ENCODE measurements at regions of chr2 and their contacts with region 1.

Region 1: GRCh38 chr2:174023591-174024523 is 58.7 kb upstream of the SP3 start:
- DNase-seq: peak; percentile 61
- H3K4me3 Mint-ChIP-seq: no peak overlapping the region
- H3K27ac Mint-ChIP-seq: peak overlapping the region; percentile 19
- H3K4me1 Mint-ChIP-seq: peaks cover 8% of the 10 kb centered on the region
- H3K27me3 Mint-ChIP-seq: no peaks in the 10 kb centered on the region

Region 2: DNA sequence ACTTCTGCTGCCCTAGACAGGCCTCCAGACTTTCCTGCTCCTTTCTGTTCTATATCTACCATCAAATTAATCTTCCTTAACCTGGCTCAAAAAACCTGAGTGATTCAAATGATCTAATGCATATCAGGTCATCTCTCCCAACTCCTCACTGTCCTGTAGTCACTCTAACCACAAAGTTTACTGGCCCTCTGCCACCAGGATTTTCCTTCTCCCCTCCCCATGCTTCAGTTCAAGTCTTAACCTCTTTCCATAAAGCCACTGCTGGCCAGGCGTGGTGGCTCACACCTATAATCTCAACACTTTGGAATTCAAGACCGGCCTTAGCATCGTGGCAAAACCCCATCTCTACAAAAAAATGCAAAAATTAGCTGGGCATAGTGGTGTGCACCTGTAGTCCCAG is 51.3 kb before region 1 on chr2:
- CTCF ChIA-PET with region 1: interaction called, 3 read pairs
- intact Hi-C with region 1: loop called (anchors 1 kb)
- DNase-seq: no peak
- H3K4me3 Mint-ChIP-seq: no peak overlapping the region
- H3K27ac Mint-ChIP-seq: no peak overlapping the region
- H3K4me1 Mint-ChIP-seq: peaks cover 10% of the 10 kb centered on the region
- H3K27me3 Mint-ChIP-seq: no peaks in the 10 kb centered on the region

Region 3: DNA sequence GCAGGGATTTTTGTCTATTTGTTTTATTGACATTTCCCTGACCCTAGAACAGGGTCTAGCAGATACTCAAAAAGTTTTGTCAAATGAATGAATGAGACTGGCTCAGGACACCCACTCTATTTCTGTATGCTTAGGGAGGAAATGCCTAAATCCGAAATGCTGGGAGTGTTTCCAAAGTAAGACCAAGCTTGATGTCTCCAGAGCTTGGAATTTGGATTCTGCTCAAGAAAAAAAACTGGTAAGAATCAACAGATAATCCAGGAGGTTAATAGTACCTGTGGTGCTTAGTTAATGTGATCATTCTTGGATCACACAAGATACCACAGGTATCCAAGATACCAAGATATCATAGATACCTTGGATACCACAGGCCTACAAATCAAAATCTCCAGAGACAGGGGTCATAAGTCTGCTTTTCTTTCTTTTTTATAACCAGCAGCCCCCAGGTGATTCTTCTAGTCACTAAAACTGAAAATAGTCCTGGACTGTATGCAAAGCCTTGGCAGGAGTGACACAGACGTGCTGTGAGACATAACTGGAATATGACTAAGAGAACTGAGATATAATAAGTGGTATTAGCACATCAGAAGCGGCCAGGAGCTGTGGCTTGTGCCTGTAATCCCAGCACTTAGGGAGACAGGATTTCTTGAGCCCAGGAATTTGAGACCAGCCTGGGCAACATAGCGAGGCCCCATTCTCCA is 18.8 kb before region 1 on chr2:
- CTCF ChIA-PET with region 1: no interaction called
- intact Hi-C with region 1: loop called (anchors 2 kb)
- DNase-seq: peak; percentile 43
- H3K4me3 Mint-ChIP-seq: no peak overlapping the region
- H3K27ac Mint-ChIP-seq: no peak overlapping the region
- H3K4me1 Mint-ChIP-seq: peaks cover 6% of the 10 kb centered on the region
- H3K27me3 Mint-ChIP-seq: peaks cover 10% of the 10 kb centered on the region

Measured in activated naive CD4-positive, alpha-beta T cell treated with anti-CD3 and anti-CD28 coated beads for 36 hours (primary cell).